Activated CD4-positive, alpha-beta memory T cell treated with anti-CD3 and anti-CD28 coated beads for 36 hours (primary cell): ENCODE measurements at regions of chr7 and their contacts with region 1.

Region 1: DNA sequence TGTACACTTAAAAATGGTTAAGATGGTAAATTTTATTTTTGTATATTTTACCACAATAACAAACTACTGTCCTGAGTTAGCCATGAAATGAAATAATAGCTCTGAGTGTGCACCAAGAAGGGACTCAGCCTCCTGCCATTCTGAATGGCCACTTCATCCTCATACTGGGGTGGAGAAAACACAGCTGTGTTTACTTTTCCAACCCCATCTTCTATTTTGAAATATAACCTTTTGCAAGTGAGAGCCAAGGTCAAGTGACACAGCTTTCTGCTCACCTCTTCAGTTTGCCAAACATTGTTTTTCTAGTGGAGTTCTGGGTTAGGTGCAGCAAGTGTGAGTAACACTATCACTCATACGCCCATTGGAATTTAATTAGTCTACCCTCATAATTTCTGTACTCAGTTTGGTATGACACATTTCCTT is 107.4 kb upstream of the GLCCI1 start:
- DNase-seq: no peak
- H3K4me3 Mint-ChIP-seq: no peak overlapping the region
- H3K27ac Mint-ChIP-seq: no peak overlapping the region
- H3K4me1 Mint-ChIP-seq: peaks cover 12% of the 10 kb centered on the region
- H3K27me3 Mint-ChIP-seq: no peaks in the 10 kb centered on the region

Region 2: DNA sequence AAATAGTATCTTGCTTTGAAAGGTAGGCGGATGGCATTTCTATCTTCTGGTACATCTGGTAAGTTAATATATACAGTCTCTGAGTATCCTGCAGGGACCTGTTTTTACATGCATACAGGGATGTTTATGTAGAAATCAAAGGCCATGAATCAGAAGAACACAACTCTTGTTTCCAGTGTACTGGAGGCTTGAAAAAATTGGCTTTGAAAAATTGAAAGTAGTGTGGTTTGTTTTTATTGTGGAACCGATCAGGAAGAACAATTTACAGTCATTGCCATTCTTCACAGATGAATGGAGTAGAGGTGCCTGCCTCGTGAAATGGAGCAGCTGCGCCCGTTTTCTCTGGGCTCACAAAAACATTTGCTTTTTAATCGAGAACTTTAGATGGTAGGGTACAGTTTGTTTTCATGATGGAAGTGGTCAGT is 88.8 kb before region 1 on chr7:
- CTCF ChIA-PET with region 1: no interaction called
- POLR2A ChIA-PET with region 1: no interaction called
- intact Hi-C with region 1: loop called (anchors 5 kb)
- DNase-seq: peak; percentile 41
- H3K4me3 Mint-ChIP-seq: no peak overlapping the region
- H3K27ac Mint-ChIP-seq: no peak overlapping the region
- H3K4me1 Mint-ChIP-seq: peaks cover 19% of the 10 kb centered on the region
- H3K27me3 Mint-ChIP-seq: no peaks in the 10 kb centered on the region

Region 3: GRCh38 chr7:7848246-7848645 is 13.0 kb before region 1 on chr7:
- CTCF ChIA-PET with region 1: interaction called, 3 read pairs
- POLR2A ChIA-PET with region 1: no interaction called
- intact Hi-C with region 1: loop called (anchors 1 kb)
- DNase-seq: no peak
- H3K4me3 Mint-ChIP-seq: no peak overlapping the region
- H3K27ac Mint-ChIP-seq: no peak overlapping the region
- H3K4me1 Mint-ChIP-seq: peaks cover 28% of the 10 kb centered on the region
- H3K27me3 Mint-ChIP-seq: no peaks in the 10 kb centered on the region

Region 4: GRCh38 chr7:7897949-7898515 is 36.8 kb after region 1 on chr7:
- CTCF ChIA-PET with region 1: no interaction called
- POLR2A ChIA-PET with region 1: no interaction called
- intact Hi-C with region 1: no loop called
- DNase-seq: no peak
- H3K4me3 Mint-ChIP-seq: no peak overlapping the region
- H3K27ac Mint-ChIP-seq: no peak overlapping the region
- H3K4me1 Mint-ChIP-seq: no peaks in the 10 kb centered on the region
- H3K27me3 Mint-ChIP-seq: no peaks in the 10 kb centered on the region

Region 5: GRCh38 chr7:7944619-7945282 is 83.5 kb after region 1 on chr7:
- CTCF ChIA-PET with region 1: no interaction called
- POLR2A ChIA-PET with region 1: no interaction called
- intact Hi-C with region 1: loop called (anchors 10 kb)
- DNase-seq: peak; percentile 84
- H3K4me3 Mint-ChIP-seq: peak overlapping the region; percentile 71
- H3K27ac Mint-ChIP-seq: peak overlapping the region; percentile 89
- H3K4me1 Mint-ChIP-seq: peaks cover 26% of the 10 kb centered on the region
- H3K27me3 Mint-ChIP-seq: no peaks in the 10 kb centered on the region